AG04449 (cell line): ENCODE measurements at regions of chr16 and their contacts with region 1.

Region 1: GRCh38 chr16:53207810-53208752 is 153.3 kb downstream of the CHD9 start:
- DNase-seq: peak; percentile 17
- H3K4me3 ChIP-seq: peak overlapping the region; percentile 67
- CTCF ChIP-seq: peak; percentile 53

Region 2: GRCh38 chr16:53080345-53081031 is 127.6 kb before region 1 on chr16:
- CTCF ChIA-PET with region 1: interaction called, 12 read pairs
- POLR2A ChIA-PET with region 1: no interaction called
- DNase-seq: no peak
- H3K4me3 ChIP-seq: peak overlapping the region; percentile 18
- CTCF ChIP-seq: no peak

Region 3: GRCh38 chr16:53159781-53160436 is 48.2 kb before region 1 on chr16:
- CTCF ChIA-PET with region 1: interaction called, 21 read pairs
- POLR2A ChIA-PET with region 1: no interaction called
- DNase-seq: no peak
- H3K4me3 ChIP-seq: no peak overlapping the region
- CTCF ChIP-seq: peak; percentile 54

Region 4: DNA sequence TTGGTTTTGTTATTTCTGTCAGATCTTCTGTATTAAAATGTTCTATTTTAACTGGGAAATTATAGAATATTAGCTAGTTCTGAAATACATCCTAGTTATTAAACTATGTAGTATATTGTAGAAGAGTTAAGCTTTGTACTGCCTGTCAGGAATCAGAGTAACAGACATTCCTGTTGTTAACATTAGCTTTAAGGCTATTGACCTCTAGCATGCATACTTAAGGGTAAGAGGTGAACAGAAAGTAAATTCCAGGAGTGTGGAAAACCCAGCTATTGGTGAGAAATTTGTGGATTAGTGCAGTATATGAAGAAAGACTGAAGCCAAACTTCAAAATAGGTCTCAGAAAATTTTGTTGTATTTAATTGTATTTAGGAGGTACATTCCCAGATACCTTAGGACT is 42.0 kb before region 1 on chr16:
- CTCF ChIA-PET with region 1: interaction called, 21 read pairs
- POLR2A ChIA-PET with region 1: no interaction called
- DNase-seq: no peak
- H3K4me3 ChIP-seq: no peak overlapping the region
- CTCF ChIP-seq: no peak

Region 5: GRCh38 chr16:53220585-53220984 is 12.5 kb after region 1 on chr16:
- CTCF ChIA-PET with region 1: interaction called, 25 read pairs
- POLR2A ChIA-PET with region 1: no interaction called
- DNase-seq: no peak
- H3K4me3 ChIP-seq: no peak overlapping the region
- CTCF ChIP-seq: peak; percentile 28